ENCODE measurements at regions of chr2 and their contacts with region 1.

Region 1: DNA sequence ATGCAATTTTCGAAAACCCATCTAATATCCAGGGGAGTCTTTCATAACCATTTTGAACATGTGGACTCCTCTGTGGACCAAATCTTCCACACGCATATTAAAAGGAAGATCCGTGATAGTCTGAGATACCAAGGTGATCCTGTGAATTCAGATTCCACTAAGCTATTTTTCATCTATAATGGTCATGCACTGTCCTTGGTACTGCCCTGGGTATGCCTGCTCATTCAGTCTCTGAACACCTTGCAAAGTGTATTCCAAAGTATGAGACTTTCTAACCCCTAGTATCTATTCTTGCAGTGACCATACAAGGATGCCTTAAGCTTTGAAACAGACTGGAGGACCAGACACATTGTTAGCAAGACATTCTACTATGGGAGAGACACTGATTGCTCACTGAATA is 217.6 kb upstream of the CCDC150 start:
- DNase-seq: no peak
- H3K4me3 ChIP-seq: no peak overlapping the region
- H3K27ac ChIP-seq: no peak overlapping the region
- H3K4me1 ChIP-seq: peaks cover 19% of the 10 kb centered on the region
- H3K27me3 ChIP-seq: no peaks in the 10 kb centered on the region
- CTCF ChIP-seq: no peak
- POLR2A ChIP-seq: no peak

Region 2: DNA sequence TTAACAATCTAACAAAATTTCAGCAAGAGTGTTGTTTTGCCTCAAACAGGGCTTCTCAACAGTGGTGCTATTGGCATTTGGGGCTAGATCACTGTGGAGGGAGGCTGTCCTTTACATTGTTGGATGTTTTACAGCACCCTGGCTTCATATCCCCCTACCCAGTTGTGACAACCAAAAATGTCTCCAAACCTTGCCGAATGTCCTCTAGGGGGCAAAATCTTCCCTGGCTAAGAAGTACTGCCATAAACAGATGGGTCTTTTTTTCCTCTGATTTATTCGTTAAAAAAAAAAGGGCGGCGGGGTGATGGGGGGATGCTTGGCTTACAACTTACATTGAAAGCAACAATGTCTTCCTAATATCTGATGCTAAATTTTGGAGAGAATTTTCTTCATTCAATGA is 10.1 kb after region 1 on chr2:
- CTCF ChIA-PET with region 1: interaction called, 10 read pairs
- POLR2A ChIA-PET with region 1: no interaction called
- dilution Hi-C with region 1: no loop called
- intact Hi-C with region 1: no loop called
- DNase-seq: peak; percentile 28
- H3K4me3 ChIP-seq: no peak overlapping the region
- H3K27ac ChIP-seq: no peak overlapping the region
- H3K4me1 ChIP-seq: peaks cover 55% of the 10 kb centered on the region
- H3K27me3 ChIP-seq: no peaks in the 10 kb centered on the region
- CTCF ChIP-seq: peak; percentile 29 to 38
- POLR2A ChIP-seq: no peak

Region 3: DNA sequence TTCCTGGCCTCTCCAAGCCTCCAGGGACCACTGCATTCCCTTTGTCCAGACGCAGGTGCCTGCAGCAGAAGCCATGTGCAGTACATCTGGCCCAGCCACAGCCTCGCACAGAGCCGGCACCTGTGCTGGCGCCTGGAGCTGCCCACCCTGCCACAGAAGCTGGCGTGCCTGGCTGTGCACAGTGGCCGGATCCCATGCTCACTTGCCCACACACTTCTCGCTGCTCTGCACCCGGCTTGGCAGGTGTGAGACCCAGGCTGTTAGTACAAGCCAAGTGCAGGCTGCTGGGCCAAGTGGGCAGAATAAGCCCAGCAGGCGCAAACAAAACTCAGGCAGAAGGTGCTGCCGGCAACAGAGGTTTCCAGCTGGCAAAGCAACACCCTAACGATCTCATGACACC is 93.2 kb after region 1 on chr2:
- CTCF ChIA-PET with region 1: no interaction called
- POLR2A ChIA-PET with region 1: no interaction called
- dilution Hi-C with region 1: no loop called
- intact Hi-C with region 1: no loop called
- DNase-seq: no peak
- H3K4me3 ChIP-seq: no peak overlapping the region
- H3K27ac ChIP-seq: no peak overlapping the region
- H3K4me1 ChIP-seq: no peaks in the 10 kb centered on the region
- H3K27me3 ChIP-seq: peaks cover 5 to 8% of the 10 kb centered on the region in 2 experiments
- CTCF ChIP-seq: no peak
- POLR2A ChIP-seq: no peak